HepG2 (cell line): ENCODE measurements at regions of chr13 and their contacts with region 1.

Region 1: DNA sequence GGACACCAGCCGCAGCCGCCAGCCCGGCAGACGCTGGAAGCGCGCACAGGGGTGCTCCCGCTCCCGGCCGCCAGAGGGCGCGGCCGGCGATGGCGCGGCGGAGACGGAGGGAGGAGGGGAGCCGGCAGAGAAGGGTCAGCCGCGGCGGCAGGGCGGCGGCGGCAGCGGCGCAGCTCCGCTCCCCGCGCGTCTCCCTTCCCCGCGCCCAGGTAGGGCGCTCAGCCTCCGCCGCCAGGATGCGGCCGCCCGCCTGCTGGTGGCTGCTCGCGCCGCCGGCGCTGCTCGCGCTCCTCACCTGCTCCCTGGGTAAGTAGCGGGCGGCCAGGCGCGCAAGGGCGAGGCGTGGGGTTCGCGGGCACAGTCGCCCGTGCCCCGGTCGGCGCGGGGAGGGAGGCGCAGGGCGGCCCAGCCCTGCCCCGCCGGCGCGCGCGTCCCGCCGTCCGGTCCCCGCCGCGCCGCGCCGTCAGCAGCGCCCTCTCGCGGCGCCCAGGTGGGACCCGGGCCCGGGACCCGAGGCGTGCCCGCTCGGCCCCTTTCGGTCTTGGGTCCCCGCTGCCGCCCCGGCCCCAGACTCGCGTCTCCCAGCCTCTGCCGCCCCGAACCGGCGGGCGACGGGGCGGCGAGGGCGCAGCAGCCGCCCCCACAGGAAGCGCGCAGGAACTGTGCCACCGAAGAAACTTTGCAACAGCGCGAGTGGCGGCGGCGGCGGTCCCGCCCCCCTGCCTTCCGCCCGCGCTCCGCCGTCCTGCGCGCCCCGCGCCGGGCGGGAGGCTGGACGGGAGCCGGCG is at the start of gene B3GLCT:
- DNase-seq: peak; percentile 57
- ATAC-seq: peak; percentile 91
- H3K4me3 ChIP-seq: peak within 1 kb of the TSS; percentile 71 to 81 (median 80)
- H3K27ac ChIP-seq: peak within 1 kb of the TSS; percentile 75
- H3K4me1 ChIP-seq: peaks cover 34% of the 10 kb centered on the region
- H3K27me3 ChIP-seq: peaks cover 0 to 11% of the 10 kb centered on the region in 2 experiments; a peak in 3 of 5 replicates
- CTCF ChIP-seq: peak; percentile 83
- EP300 ChIP-seq: no peak
- POLR2A ChIP-seq: peak in 1 of 2 experiments; percentile 33; a peak in 1 of 4 replicates
- RAD21 ChIP-seq: peak; percentile 72
- total RNA-seq, gene B3GLCT: 4.4 and 7.1 TPM in 2 replicates

Region 2: DNA sequence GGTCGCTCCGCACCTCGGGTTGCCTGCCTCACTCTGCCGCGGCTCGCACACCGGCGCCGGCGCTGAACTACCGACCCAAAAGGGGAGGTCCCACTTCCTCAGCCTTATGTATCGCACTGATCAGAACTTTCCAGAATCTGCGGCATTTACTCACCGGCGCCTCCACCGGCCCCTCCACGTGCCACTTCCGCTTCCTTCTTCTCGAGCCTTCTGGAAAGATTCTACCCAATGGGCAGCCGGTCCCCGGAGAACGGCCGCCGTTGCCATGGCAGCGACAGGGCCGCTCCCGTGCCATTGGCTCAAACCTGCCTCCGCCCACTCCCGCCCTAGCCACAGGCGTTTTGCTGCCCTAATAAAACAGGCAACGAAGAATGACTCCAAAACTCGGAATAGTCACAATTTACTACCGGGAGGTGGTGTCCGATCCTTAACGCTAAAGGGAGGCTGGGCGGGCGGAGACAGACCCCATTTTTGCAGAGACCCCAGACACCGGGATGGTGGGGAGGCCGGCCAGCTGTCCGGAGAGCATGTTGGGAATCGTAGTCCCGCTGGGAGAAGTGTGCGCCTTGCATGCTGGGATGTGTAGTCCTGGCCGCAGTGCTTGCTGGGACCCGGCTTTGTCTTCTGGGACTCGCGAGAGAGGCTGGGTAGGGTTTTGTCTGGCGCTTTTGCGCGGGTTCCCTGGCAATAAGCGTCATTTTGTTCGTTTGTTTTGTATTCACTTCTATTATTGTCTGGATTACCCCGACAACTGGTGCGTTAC is 38.0 kb before region 1 on chr13 and contains the start of gene HSPH1:
- CTCF ChIA-PET with region 1: no interaction called
- POLR2A ChIA-PET with region 1: interaction called, 3 read pairs
- in situ Hi-C with region 1: loop called (anchors 5 kb)
- intact Hi-C with region 1: loop called (anchors 2 kb)
- DNase-seq: peak; percentile 96
- ATAC-seq: peak; percentile 94
- H3K4me3 ChIP-seq: peak within 1 kb of the TSS; percentile 91 to 94 (median 94)
- H3K27ac ChIP-seq: peak within 1 kb of the TSS; percentile 78
- H3K4me1 ChIP-seq: peaks cover 50% of the 10 kb centered on the region
- H3K27me3 ChIP-seq: no peaks in the 10 kb centered on the region; a peak in 1 of 5 replicates
- CTCF ChIP-seq: no peak
- EP300 ChIP-seq: peak in 1 of 2 experiments; percentile 74; a peak in 2 of 4 replicates
- POLR2A ChIP-seq: peak; percentile 86 to 87
- RAD21 ChIP-seq: no peak
- total RNA-seq, gene HSPH1: 62.9 and 131 TPM in 2 replicates

Region 3: GRCh38 chr13:31174018-31174417 is 26.0 kb before region 1 on chr13:
- CTCF ChIA-PET with region 1: interaction called, 3 read pairs
- POLR2A ChIA-PET with region 1: no interaction called
- in situ Hi-C with region 1: no loop called
- intact Hi-C with region 1: loop called (anchors 1 kb)
- DNase-seq: peak; percentile 38
- ATAC-seq: peak; percentile 58
- H3K4me3 ChIP-seq: no peak overlapping the region
- H3K27ac ChIP-seq: no peak overlapping the region
- H3K4me1 ChIP-seq: peaks cover 64% of the 10 kb centered on the region
- H3K27me3 ChIP-seq: no peaks in the 10 kb centered on the region
- CTCF ChIP-seq: peak; percentile 43
- EP300 ChIP-seq: no peak
- POLR2A ChIP-seq: no peak
- RAD21 ChIP-seq: no peak

Region 4: GRCh38 chr13:31301119-31301518 is 101.1 kb after region 1 on chr13:
- CTCF ChIA-PET with region 1: no interaction called
- POLR2A ChIA-PET with region 1: no interaction called
- in situ Hi-C with region 1: no loop called
- intact Hi-C with region 1: no loop called
- DNase-seq: no peak
- ATAC-seq: no peak
- H3K4me3 ChIP-seq: no peak overlapping the region
- H3K27ac ChIP-seq: no peak overlapping the region
- H3K4me1 ChIP-seq: no peaks in the 10 kb centered on the region
- H3K27me3 ChIP-seq: no peaks in the 10 kb centered on the region; a peak in 1 of 5 replicates
- CTCF ChIP-seq: no peak
- EP300 ChIP-seq: no peak
- POLR2A ChIP-seq: no peak
- RAD21 ChIP-seq: no peak

Region 5: DNA sequence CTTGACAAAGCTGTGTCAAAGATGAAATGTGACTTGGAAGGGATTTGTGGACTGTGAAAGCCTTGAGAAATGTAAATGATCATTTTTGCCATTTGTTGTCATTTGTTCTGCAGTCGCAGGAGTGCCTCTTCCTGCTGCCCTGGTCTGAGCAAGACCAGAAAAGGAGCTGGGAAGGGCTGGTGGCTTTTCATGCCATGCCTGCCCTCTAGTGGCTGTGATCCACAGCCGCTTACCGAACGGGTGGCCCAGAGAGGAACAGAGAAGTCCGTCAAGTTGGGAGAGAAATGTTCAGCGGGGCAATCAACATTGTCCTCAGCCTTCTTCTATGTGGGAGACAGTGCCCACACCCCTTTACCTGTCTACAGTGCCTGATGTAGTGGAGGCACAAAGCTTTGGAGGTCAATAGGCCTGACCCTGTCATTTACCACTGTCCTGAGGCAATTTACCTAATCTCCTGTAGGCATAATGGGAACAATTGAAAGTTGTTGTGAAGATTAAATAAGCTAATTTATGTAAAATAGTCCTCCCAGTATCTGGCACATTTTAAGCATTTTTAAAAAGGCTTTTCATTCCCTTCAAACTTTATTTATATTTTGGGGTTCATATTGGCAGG is 224.2 kb after region 1 on chr13:
- CTCF ChIA-PET with region 1: interaction called, 8 read pairs
- POLR2A ChIA-PET with region 1: no interaction called
- in situ Hi-C with region 1: no loop called
- intact Hi-C with region 1: loop called (anchors 1 kb)
- DNase-seq: peak; percentile 64
- ATAC-seq: peak; percentile 100
- H3K4me3 ChIP-seq: no peak overlapping the region
- H3K27ac ChIP-seq: no peak overlapping the region
- H3K4me1 ChIP-seq: no peaks in the 10 kb centered on the region
- H3K27me3 ChIP-seq: peaks cover 0 to 2% of the 10 kb centered on the region in 2 experiments; a peak in 1 of 5 replicates
- CTCF ChIP-seq: peak; percentile 92
- EP300 ChIP-seq: no peak
- POLR2A ChIP-seq: no peak
- RAD21 ChIP-seq: no peak; the same call in 1 of the 2 replicates

Region 6: GRCh38 chr13:31807090-31807541 is 607.1 kb after region 1 on chr13:
- CTCF ChIA-PET with region 1: no interaction called
- POLR2A ChIA-PET with region 1: no interaction called
- in situ Hi-C with region 1: no loop called
- intact Hi-C with region 1: no loop called
- DNase-seq: no peak
- ATAC-seq: no peak
- H3K4me3 ChIP-seq: no peak overlapping the region
- H3K27ac ChIP-seq: no peak overlapping the region
- H3K4me1 ChIP-seq: no peaks in the 10 kb centered on the region
- H3K27me3 ChIP-seq: no peaks in the 10 kb centered on the region; a peak in 1 of 5 replicates
- CTCF ChIP-seq: no peak
- EP300 ChIP-seq: no peak
- POLR2A ChIP-seq: no peak
- RAD21 ChIP-seq: no peak